ENCODE measurements at regions of chr5 and their contacts with region 1.

Region 1: DNA sequence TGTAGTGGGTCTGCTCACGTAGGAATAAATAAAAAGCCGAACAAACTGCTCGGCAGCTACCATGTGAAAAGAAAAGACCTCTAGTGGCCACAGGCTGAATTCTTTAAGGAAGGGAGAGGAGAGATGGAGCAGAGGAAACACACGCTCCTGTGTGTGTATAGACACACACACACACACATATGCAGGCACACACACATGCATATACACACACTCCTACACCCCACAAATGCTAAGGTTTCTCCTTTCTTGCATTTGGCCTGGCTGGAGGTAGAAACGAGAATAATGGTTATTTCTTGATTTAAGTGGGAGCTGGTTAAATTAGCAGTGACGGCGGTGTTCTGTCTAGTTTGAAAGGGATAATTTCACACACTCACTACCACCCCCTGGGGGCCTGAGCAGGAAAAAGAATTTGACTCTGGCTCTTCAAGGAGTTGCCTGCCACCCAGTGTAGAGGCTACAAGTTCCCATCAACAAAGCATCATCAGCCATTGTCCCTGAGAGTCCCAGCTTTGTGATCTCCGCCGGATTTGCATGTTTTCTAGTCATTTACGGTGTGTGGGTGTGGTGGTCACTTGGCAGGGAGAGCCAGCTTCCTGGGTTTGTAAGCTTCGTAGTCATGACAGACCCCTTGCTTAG is at the start of gene INSYN2B:
- DNase-seq: peak; percentile 56
- ATAC-seq: peak; percentile 91
- H3K4me3 ChIP-seq: no peak within 1 kb of the TSS
- H3K27ac ChIP-seq: no peak within 1 kb of the TSS
- H3K4me1 ChIP-seq: peaks cover 0 to 3% of the 10 kb centered on the region in 2 experiments; a peak in 1 of 4 replicates
- H3K27me3 ChIP-seq: peaks cover 46% of the 10 kb centered on the region
- CTCF ChIP-seq: peak; percentile 51 to 93 (median 71)
- POLR2A ChIP-seq: no peak
- RAD21 ChIP-seq: peak; percentile 44
- total RNA-seq, gene INSYN2B: not detected

Region 2: GRCh38 chr5:168706655-168707069 is 1273.9 kb before region 1 on chr5:
- CTCF ChIA-PET with region 1: no interaction called
- POLR2A ChIA-PET with region 1: no interaction called
- RAD21 ChIA-PET with region 1: no interaction called
- intact Hi-C with region 1: loop called (anchors 5 kb)
- DNase-seq: peak; percentile 7
- ATAC-seq: peak; percentile 89
- H3K4me3 ChIP-seq: no peak overlapping the region
- H3K27ac ChIP-seq: no peak overlapping the region
- H3K4me1 ChIP-seq: no peaks in the 10 kb centered on the region
- H3K27me3 ChIP-seq: no peaks in the 10 kb centered on the region
- CTCF ChIP-seq: peak; percentile 45 to 71 (median 67); a peak in 5 of 6 replicates
- POLR2A ChIP-seq: no peak
- RAD21 ChIP-seq: peak; percentile 79

Region 3: GRCh38 chr5:169701910-169702451 is 278.6 kb before region 1 on chr5:
- CTCF ChIA-PET with region 1: interaction called, 18 read pairs
- POLR2A ChIA-PET with region 1: no interaction called
- RAD21 ChIA-PET with region 1: no interaction called
- intact Hi-C with region 1: loop called (anchors 1 kb)
- DNase-seq: no peak
- ATAC-seq: peak; percentile 61
- H3K4me3 ChIP-seq: no peak overlapping the region
- H3K27ac ChIP-seq: no peak overlapping the region
- H3K4me1 ChIP-seq: peaks cover 0 to 6% of the 10 kb centered on the region in 2 experiments; a peak in 2 of 4 replicates
- H3K27me3 ChIP-seq: peaks cover 10% of the 10 kb centered on the region
- CTCF ChIP-seq: peak; percentile 20 to 40 (median 29); a peak in 3 of 6 replicates
- POLR2A ChIP-seq: no peak
- RAD21 ChIP-seq: peak; percentile 45

Region 4: DNA sequence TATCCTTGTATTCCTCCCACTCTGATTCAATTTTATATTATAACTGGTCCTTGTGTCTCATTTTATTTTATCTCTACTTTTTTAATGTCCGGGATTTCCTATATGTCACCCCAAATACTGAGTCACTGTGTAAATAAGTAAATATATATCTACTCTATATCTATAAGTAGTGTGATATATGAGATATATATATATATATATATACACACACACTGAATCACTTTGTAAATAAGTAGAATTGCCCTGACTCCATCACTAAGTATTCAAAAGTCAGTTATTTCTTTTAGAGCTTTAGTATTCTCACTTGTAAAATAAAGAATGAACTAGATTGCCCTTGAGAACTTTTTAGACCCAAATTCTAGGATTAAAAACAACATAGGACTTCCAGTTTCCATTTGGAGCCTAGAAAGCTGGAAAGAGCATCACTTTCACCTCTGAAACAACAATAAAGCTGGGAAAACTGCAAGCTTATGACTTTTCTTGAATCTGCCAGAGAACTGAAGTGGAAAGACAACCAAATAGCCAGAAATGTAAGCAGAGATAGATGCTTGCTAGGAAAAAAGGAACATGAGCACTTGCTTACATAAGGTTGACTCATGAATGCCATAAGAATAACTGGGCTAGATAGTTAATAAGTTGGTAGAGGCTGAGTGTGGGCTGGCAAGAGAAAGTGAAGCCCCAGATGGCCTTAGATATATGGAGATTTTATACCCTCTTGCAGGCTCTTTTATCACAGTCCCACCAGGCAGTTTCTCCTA is 1157.4 kb after region 1 on chr5:
- CTCF ChIA-PET with region 1: no interaction called
- POLR2A ChIA-PET with region 1: no interaction called
- RAD21 ChIA-PET with region 1: no interaction called
- intact Hi-C with region 1: no loop called
- DNase-seq: no peak
- ATAC-seq: no peak
- H3K4me3 ChIP-seq: no peak overlapping the region
- H3K27ac ChIP-seq: no peak overlapping the region
- H3K4me1 ChIP-seq: no peaks in the 10 kb centered on the region
- H3K27me3 ChIP-seq: no peaks in the 10 kb centered on the region
- CTCF ChIP-seq: no peak
- POLR2A ChIP-seq: no peak
- RAD21 ChIP-seq: no peak